PC-3 (cell line): ENCODE measurements at regions of chr14 and their contacts with region 1.

Region 1: GRCh38 chr14:37116933-37117849 is 55.2 kb downstream of the SLC25A21 start:
- DNase-seq: peak; percentile 95
- ATAC-seq: peak; percentile 61
- H3K4me3 ChIP-seq: peak overlapping the region; percentile 37
- H3K27ac ChIP-seq: peak overlapping the region; percentile 88
- H3K4me1 ChIP-seq: peaks cover 57% of the 10 kb centered on the region
- H3K27me3 ChIP-seq: no peaks in the 10 kb centered on the region
- CTCF ChIP-seq: peak; percentile 84

Region 2: GRCh38 chr14:36655963-36656686 is 461.1 kb before region 1 on chr14:
- CTCF ChIA-PET with region 1: interaction called, 6 read pairs
- POLR2A ChIA-PET with region 1: interaction called, 4 read pairs
- intact Hi-C with region 1: loop called (anchors 2 kb)
- DNase-seq: peak; percentile 77
- ATAC-seq: peak; percentile 39
- H3K4me3 ChIP-seq: peak overlapping the region; percentile 60
- H3K27ac ChIP-seq: no peak overlapping the region
- H3K4me1 ChIP-seq: peaks cover 18% of the 10 kb centered on the region
- H3K27me3 ChIP-seq: no peaks in the 10 kb centered on the region
- CTCF ChIP-seq: peak; percentile 74

Region 3: DNA sequence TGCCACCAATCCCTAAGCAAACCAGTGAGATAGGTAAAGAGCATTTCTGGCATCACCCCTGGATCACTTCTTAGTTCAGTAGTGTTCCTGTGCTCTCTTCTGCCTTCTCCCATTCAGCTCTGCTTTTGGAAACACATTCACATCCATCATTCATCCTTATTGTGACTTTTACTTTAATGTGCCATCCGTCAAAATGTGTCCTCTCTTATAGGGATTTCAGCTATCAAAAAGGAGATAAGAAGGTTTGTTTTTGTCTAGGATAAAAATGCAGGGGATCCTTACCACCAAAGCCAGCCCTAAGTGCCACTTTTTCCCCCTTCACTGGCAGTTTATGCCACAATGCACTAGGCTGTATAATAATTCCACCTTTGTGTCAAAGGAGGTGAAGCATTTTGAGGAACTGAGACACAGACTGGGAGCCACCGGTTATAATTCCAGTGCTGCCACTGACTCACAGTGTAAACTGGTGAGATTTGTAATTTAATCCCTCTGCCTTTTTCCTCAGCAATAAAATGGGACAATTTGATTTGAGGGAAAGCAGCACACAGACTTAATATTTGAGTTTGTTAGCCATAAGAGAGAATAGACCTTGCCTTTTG is 297.0 kb before region 1 on chr14:
- CTCF ChIA-PET with region 1: no interaction called
- POLR2A ChIA-PET with region 1: no interaction called
- intact Hi-C with region 1: loop called (anchors 1 kb)
- DNase-seq: peak; percentile 91
- ATAC-seq: peak; percentile 94
- H3K4me3 ChIP-seq: peak overlapping the region; percentile 29; the same call in 1 of the 2 replicates
- H3K27ac ChIP-seq: peak overlapping the region; percentile 63
- H3K4me1 ChIP-seq: peaks cover 49% of the 10 kb centered on the region
- H3K27me3 ChIP-seq: no peaks in the 10 kb centered on the region
- CTCF ChIP-seq: no peak

Region 4: GRCh38 chr14:36981832-36982528 is 135.2 kb before region 1 on chr14:
- CTCF ChIA-PET with region 1: no interaction called
- POLR2A ChIA-PET with region 1: no interaction called
- intact Hi-C with region 1: loop called (anchors 1 kb)
- DNase-seq: peak; percentile 93
- ATAC-seq: peak; percentile 92
- H3K4me3 ChIP-seq: no peak overlapping the region
- H3K27ac ChIP-seq: peak overlapping the region; percentile 91
- H3K4me1 ChIP-seq: peaks cover 27% of the 10 kb centered on the region
- H3K27me3 ChIP-seq: no peaks in the 10 kb centered on the region
- CTCF ChIP-seq: no peak

Region 5: GRCh38 chr14:37081202-37081601 is 36.0 kb before region 1 on chr14:
- CTCF ChIA-PET with region 1: no interaction called
- POLR2A ChIA-PET with region 1: no interaction called
- intact Hi-C with region 1: loop called (anchors 1 kb)
- DNase-seq: peak; percentile 93
- ATAC-seq: peak; percentile 94
- H3K4me3 ChIP-seq: no peak overlapping the region
- H3K27ac ChIP-seq: peak overlapping the region; percentile 17; the same call in 1 of the 2 replicates
- H3K4me1 ChIP-seq: peaks cover 12% of the 10 kb centered on the region
- H3K27me3 ChIP-seq: no peaks in the 10 kb centered on the region
- CTCF ChIP-seq: no peak

Region 6: DNA sequence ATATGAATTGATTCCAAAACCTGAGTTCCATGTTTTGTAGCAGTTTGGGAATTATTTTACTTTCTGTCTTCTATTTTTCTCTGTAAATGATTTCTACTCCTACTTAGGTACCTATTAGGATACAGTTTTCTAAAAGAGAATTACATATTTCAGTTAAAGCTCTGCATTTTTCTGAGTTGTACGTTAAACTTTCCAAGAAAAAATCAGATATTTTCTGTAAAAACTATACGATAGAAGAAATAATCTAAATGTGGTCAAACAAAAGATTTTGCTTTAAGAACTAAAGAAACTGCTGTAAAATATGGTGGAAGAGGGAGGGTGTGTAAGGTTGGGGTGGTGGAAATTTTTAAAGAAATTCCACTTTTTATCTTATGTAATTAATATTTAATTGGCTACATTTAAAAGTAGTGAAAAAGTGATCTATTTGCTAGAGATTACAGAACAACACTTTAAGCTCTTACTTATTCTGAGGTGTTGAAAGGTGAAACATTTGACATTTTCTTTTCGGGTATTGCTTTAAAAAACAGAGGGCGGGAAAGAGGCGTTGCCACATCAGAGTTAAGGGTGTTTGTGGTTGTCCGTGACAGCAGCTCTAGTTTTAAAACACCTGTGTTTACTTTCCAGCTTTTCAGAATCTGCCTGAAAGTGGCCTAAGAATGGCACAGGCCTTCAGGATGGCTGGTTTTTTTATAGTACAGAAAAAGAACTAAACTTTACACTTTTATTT is 267.8 kb after region 1 on chr14:
- CTCF ChIA-PET with region 1: no interaction called
- POLR2A ChIA-PET with region 1: no interaction called
- intact Hi-C with region 1: no loop called
- DNase-seq: no peak
- ATAC-seq: no peak
- H3K4me3 ChIP-seq: no peak overlapping the region
- H3K27ac ChIP-seq: no peak overlapping the region
- H3K4me1 ChIP-seq: no peaks in the 10 kb centered on the region
- H3K27me3 ChIP-seq: no peaks in the 10 kb centered on the region
- CTCF ChIP-seq: no peak